Naive thymus-derived CD4-positive, alpha-beta T cell (primary cell): ENCODE measurements at regions of chr12 and their contacts with region 1.

Region 1: DNA sequence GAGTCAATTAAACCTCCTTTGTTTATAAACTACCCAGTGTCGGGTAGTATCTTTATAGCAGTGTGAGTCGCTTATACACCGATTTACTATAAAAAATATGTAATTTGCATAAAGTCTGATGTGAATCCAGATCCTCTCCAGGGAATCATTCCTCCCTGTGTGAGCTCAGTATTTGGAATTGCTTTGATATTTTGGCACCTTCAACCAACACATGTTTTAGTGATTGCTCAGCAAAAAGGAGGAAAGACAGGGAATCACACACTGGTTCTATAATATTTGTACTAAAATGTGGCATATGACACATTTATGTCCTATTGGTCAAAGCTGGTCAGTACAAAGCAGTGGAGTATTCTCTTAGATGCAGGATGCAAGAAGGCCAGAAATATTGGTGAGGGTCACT is 703.9 kb upstream of the ATXN7L3B start:
- DNase-seq: no peak
- ATAC-seq: no peak
- H3K4me3 ChIP-seq: no peak overlapping the region
- H3K4me3 Mint-ChIP-seq: no peak overlapping the region
- H3K27ac ChIP-seq: no peak overlapping the region
- H3K27ac Mint-ChIP-seq: no peak overlapping the region
- H3K4me1 ChIP-seq: no peaks in the 10 kb centered on the region
- H3K4me1 Mint-ChIP-seq: no peaks in the 10 kb centered on the region
- H3K27me3 ChIP-seq: no peaks in the 10 kb centered on the region
- H3K27me3 Mint-ChIP-seq: no peaks in the 10 kb centered on the region

Region 2: GRCh38 chr12:75452675-75453330 is 1619.1 kb after region 1 on chr12:
- CTCF ChIA-PET with region 1: no interaction called
- POLR2A ChIA-PET with region 1: no interaction called
- intact Hi-C with region 1: loop called in 1 of 2 experiments (anchors 10 kb)
- DNase-seq: no peak
- ATAC-seq: no peak
- H3K4me3 ChIP-seq: no peak overlapping the region
- H3K4me3 Mint-ChIP-seq: no peak overlapping the region
- H3K27ac ChIP-seq: no peak overlapping the region
- H3K27ac Mint-ChIP-seq: no peak overlapping the region
- H3K4me1 ChIP-seq: peaks cover 12% of the 10 kb centered on the region in 2 donors
- H3K4me1 Mint-ChIP-seq: peaks cover 12 to 19% (median 15%) of the 10 kb centered on the region in 7 donors
- H3K27me3 ChIP-seq: no peaks in the 10 kb centered on the region
- H3K27me3 Mint-ChIP-seq: peaks cover 0 to 24% (median 0%) of the 10 kb centered on the region in 5 donors